ENCODE measurements at regions of chr9 and their contacts with region 1.

Region 1: GRCh38 chr9:35726881-35727438 is 5.0 kb downstream of the TLN1 start:
- DNase-seq: no peak
- H3K4me3 ChIP-seq: no peak overlapping the region
- H3K27ac ChIP-seq: 0 out of 2 replicates have a peak overlapping the region, but pooled peaks have one; percentile 33
- H3K4me1 ChIP-seq: peaks cover 21 to 42% (median 30%) of the 10 kb centered on the region in 4 experiments
- H3K27me3 ChIP-seq: no peaks in the 10 kb centered on the region
- CTCF ChIP-seq: peak in 1 of 3 experiments; percentile 2; a peak in 1 of 4 replicates
- EP300 ChIP-seq: no peak
- POLR2A ChIP-seq: no peak
- RAD21 ChIP-seq: no peak

Region 2: DNA sequence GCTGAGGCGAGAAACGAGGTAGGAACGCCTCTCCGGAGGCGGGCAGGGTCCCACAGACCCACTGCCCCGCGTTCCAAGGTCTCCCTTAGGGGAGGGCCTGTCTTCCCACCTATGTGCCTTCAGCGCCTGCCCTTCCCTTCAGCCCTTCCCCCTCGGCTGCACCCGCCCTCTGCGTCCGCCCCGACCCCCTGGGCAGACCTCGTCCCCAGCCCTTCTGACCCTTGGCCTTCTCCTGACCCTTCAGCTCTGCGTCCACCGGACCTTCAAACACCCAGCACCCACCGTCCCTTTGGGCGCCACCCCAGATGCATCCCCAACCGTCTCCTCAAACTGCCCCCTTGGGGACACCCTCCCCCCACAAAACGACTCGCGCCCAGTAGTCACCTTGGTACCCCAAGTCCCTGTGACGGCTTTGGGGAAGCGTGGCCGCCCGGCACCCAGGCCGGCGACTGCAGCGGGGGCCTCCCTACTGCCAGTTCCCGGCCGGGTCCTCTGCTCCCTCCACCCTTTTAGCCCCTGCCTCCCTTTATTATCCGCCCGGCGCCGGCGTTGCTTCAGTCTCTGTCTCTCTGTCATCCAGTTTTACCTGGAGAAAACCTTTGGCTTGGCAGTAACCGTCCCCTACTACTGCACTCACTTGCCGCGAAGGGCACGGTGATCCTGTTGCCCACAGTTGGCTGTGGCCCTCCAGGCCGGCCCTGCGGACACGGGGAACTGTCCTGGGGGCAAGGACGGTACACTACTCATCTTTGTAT is 236.6 kb before region 1 on chr9:
- CTCF ChIA-PET with region 1: no interaction called
- POLR2A ChIA-PET with region 1: no interaction called
- DNase-seq: peak in 1 of 2 experiments; percentile 66
- H3K4me3 ChIP-seq: peak overlapping the region; percentile 71 to 87 (median 74)
- H3K27ac ChIP-seq: no peak overlapping the region
- H3K4me1 ChIP-seq: peaks cover 0 to 8% (median 4%) of the 10 kb centered on the region in 4 experiments; a peak in 4 of 7 replicates
- H3K27me3 ChIP-seq: peaks cover 0 to 5% (median 0%) of the 10 kb centered on the region in 4 experiments; a peak in 1 of 7 replicates
- CTCF ChIP-seq: no peak
- EP300 ChIP-seq: no peak
- POLR2A ChIP-seq: no peak
- RAD21 ChIP-seq: no peak

Region 3: DNA sequence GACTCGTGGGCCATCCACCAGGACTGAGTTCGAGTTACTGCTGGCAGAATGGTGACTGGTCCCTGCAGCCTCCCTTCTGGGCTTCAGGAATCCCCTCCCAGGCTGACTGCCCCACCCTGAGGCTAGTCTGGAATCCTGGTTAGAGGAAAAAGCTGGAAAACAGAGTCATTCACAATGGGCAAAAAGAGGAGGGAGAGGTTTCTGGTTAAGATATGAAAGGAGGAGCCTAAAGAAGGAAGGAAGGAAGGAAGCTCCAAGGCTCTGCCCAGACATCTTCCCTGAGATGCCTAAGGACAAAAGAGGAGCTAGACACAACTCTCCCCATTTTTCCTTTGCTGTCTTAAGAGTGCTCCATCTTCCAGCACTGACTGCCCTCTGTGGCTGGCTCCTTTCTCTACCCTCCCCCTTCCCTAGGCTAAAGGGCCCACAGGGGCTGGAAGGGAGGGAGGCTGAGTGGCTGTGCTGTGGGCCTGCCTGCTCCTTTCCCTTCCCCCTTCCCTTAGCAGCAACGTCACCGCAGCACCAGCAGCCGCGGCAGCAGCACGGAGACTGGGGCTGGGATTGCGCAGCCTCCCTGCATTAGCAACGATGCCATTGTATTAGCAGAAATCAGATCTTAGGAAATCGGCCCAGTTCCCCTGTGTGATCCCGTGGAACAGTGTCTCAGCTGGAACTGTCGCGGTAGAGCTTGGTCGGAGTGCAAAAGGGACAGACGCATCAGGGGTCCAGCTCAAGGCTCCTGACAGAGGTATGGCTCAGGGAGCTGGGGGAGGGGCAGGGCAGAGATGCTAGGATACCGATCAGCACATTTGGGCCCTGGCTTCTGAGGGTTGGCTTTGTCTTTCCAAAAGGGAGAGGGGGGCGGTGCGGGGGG is 188.4 kb before region 1 on chr9:
- CTCF ChIA-PET with region 1: no interaction called
- POLR2A ChIA-PET with region 1: no interaction called
- DNase-seq: peak in 1 of 2 experiments; percentile 73
- H3K4me3 ChIP-seq: peak overlapping the region; percentile 37 to 62 (median 46); a peak in 7 of 8 replicates
- H3K27ac ChIP-seq: no peak overlapping the region; the same call in 1 of the 2 replicates
- H3K4me1 ChIP-seq: peaks cover 10 to 22% (median 13%) of the 10 kb centered on the region in 4 experiments
- H3K27me3 ChIP-seq: no peaks in the 10 kb centered on the region
- CTCF ChIP-seq: no peak
- EP300 ChIP-seq: no peak
- POLR2A ChIP-seq: peak in 1 of 2 experiments; percentile 66; a peak in 2 of 3 replicates
- RAD21 ChIP-seq: 0 out of 4 replicates have a peak, but pooled peaks of 1 of the 2 experiments have one; percentile 2

Region 4: DNA sequence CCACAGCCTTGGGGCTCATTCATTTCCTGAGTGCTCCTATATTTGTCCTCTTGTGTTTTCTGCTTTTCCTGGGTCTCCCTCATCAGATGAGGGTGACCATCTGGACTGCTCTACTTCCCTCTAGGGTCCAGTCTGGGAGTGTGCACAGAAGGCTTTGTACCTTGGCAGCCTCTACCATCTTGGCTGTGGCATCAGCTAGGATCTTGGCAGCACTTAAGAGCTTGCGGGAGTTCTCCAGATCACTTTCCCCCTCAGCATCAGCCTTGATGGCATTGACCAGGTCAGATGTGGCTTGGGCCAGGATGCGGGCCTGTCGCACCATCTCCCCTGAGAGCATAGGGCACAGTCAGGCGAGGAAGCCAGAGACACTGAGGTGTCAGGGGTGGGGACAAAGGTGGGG is 10.7 kb before region 1 on chr9:
- CTCF ChIA-PET with region 1: interaction called, 198 read pairs
- POLR2A ChIA-PET with region 1: interaction called, 51 read pairs
- DNase-seq: no peak
- H3K4me3 ChIP-seq: no peak overlapping the region
- H3K27ac ChIP-seq: no peak overlapping the region
- H3K4me1 ChIP-seq: no peaks in the 10 kb centered on the region
- H3K27me3 ChIP-seq: no peaks in the 10 kb centered on the region
- CTCF ChIP-seq: peak in 1 of 3 experiments; percentile 4; a peak in 1 of 4 replicates
- EP300 ChIP-seq: no peak
- POLR2A ChIP-seq: no peak
- RAD21 ChIP-seq: no peak